Activated naive CD4-positive, alpha-beta T cell treated with anti-CD3 and anti-CD28 coated beads, Interleukin-2, amount 10 ng/mL, durations not matched to agents 7 days and 5 days (primary cell): ENCODE measurements at regions of chr20 and their contacts with region 1.

Region 1: GRCh38 chr20:32779500-32780211 is 17.5 kb downstream of the DNMT3B start:
- DNase-seq: no peak
- H3K4me3 Mint-ChIP-seq: no peak overlapping the region
- H3K27ac Mint-ChIP-seq: no peak overlapping the region
- H3K4me1 Mint-ChIP-seq: peaks cover 5% of the 10 kb centered on the region
- H3K27me3 Mint-ChIP-seq: no peaks in the 10 kb centered on the region

Region 2: GRCh38 chr20:32521780-32522525 is 257.7 kb before region 1 on chr20:
- CTCF ChIA-PET with region 1: interaction called, 30 read pairs
- DNase-seq: peak; percentile 78
- H3K4me3 Mint-ChIP-seq: no peak overlapping the region
- H3K27ac Mint-ChIP-seq: peak overlapping the region; percentile 73
- H3K4me1 Mint-ChIP-seq: peaks cover 60% of the 10 kb centered on the region
- H3K27me3 Mint-ChIP-seq: no peaks in the 10 kb centered on the region

Region 3: GRCh38 chr20:32737371-32738223 is 42.1 kb before region 1 on chr20:
- CTCF ChIA-PET with region 1: interaction called, 30 read pairs
- DNase-seq: peak; percentile 56
- H3K4me3 Mint-ChIP-seq: peak overlapping the region; percentile 45
- H3K27ac Mint-ChIP-seq: peak overlapping the region; percentile 91
- H3K4me1 Mint-ChIP-seq: peaks cover 55% of the 10 kb centered on the region
- H3K27me3 Mint-ChIP-seq: no peaks in the 10 kb centered on the region

Region 4: GRCh38 chr20:32762149-32762753 is 17.4 kb before region 1 on chr20 and contains the start of gene DNMT3B:
- CTCF ChIA-PET with region 1: interaction called, 35 read pairs
- DNase-seq: peak; percentile 87
- H3K4me3 Mint-ChIP-seq: peak within 1 kb of the TSS; percentile 85
- H3K27ac Mint-ChIP-seq: peak within 1 kb of the TSS; percentile 7
- H3K4me1 Mint-ChIP-seq: peaks cover 24% of the 10 kb centered on the region
- H3K27me3 Mint-ChIP-seq: peaks cover 20% of the 10 kb centered on the region

Region 5: DNA sequence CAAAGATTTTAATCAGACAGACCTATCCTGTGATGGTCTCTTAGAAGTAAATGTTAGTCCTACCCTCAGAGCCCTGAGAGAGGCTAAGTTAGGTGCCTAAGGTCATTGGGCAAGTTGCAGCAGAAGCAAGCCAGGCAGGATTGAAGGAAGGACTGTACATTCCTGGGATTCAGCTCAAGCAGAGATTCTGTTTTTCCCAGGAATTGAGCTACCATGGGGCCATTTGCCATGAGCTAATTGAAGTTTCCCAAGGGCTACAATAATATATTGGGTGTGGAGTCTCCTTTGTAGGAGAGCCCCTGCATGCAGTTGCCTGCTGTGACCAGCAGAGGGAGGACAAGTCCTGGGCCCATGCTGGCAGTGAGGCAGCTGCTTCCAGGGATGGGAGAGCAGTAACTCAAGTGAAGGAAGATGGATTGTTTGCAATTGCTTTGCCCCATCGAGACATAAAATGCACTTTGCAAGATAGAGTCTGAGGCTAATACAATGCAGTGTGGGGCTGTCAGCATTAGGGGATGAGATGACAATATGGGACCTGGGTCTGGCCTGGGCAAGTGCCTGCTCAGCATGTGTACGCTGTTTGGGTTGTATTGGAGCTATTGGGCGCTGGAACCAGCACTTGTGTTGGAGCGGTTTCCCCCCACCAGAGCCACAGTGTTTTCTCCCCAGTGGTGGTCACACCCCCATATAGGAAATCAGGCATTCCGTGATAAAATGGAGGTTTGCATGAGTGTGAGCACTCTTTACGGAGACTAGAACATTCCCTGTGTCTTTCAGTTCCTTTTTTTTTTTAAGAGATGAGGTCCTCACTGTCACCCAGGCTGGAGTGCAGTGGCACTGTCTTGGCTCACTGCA is 10.5 kb after region 1 on chr20:
- CTCF ChIA-PET with region 1: interaction called, 14 read pairs
- DNase-seq: peak; percentile 80
- H3K4me3 Mint-ChIP-seq: no peak overlapping the region
- H3K27ac Mint-ChIP-seq: no peak overlapping the region
- H3K4me1 Mint-ChIP-seq: peaks cover 30% of the 10 kb centered on the region
- H3K27me3 Mint-ChIP-seq: no peaks in the 10 kb centered on the region

Region 6: GRCh38 chr20:32999603-33000250 is 220.1 kb after region 1 on chr20:
- CTCF ChIA-PET with region 1: no interaction called
- DNase-seq: no peak
- H3K4me3 Mint-ChIP-seq: no peak overlapping the region
- H3K27ac Mint-ChIP-seq: no peak overlapping the region
- H3K4me1 Mint-ChIP-seq: peaks cover 5% of the 10 kb centered on the region
- H3K27me3 Mint-ChIP-seq: peaks cover 9% of the 10 kb centered on the region